ENCODE measurements at regions of chr12 and their contacts with region 1.

Region 1: DNA sequence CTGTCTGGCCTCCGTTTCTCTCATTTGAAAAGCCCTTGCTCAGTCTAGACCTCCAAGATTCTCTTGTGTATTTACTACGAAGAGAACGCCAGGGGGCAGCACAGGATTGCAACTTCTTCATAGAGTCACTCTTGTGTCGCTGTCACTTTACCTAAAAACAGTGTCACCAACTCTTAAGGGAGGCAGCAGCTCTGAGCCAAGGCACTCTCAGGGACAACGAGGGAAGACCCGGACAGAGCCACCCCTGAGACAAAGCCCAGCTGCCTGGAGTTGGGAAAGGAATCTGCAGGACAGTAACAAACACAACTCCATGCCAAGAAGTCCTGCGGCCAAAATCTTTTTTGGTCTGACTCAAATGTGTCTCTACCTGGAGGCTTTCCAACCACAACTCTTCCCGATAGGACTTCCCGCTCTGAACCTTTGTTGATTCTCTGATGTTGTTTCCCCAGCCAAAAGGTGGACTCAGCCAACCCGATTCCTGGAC is 9.6 kb upstream of the RPAP3 start:
- DNase-seq: peak; percentile 70 to 83
- ATAC-seq: peak; percentile 60

Region 2: DNA sequence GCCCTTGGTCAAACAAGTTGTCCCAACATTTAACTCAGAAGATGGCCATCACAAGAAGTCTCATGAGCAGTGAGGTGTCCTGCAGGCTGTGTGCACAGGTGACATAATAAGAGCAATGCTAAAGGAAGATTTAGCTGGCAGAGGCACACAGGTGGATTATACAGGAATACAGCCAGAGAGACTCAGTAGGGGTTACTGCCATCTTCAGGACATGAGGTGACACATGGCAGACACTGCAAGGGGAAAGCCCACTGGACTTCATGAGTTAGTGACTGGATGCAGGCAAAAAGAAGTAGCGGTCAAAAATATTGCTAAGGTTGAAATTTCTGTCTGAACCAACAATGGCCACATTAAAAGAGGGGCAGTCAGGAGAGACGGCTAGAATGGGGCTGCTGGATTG is 57.9 kb before region 1 on chr12:
- intact Hi-C with region 1: no loop called
- DNase-seq: no peak
- ATAC-seq: no peak

Region 3: GRCh38 chr12:47767216-47767724 is 51.8 kb after region 1 on chr12:
- intact Hi-C with region 1: loop called (anchors 5 to 10 kb)
- DNase-seq: peak; percentile 54 to 65
- ATAC-seq: peak; percentile 78

Region 4: DNA sequence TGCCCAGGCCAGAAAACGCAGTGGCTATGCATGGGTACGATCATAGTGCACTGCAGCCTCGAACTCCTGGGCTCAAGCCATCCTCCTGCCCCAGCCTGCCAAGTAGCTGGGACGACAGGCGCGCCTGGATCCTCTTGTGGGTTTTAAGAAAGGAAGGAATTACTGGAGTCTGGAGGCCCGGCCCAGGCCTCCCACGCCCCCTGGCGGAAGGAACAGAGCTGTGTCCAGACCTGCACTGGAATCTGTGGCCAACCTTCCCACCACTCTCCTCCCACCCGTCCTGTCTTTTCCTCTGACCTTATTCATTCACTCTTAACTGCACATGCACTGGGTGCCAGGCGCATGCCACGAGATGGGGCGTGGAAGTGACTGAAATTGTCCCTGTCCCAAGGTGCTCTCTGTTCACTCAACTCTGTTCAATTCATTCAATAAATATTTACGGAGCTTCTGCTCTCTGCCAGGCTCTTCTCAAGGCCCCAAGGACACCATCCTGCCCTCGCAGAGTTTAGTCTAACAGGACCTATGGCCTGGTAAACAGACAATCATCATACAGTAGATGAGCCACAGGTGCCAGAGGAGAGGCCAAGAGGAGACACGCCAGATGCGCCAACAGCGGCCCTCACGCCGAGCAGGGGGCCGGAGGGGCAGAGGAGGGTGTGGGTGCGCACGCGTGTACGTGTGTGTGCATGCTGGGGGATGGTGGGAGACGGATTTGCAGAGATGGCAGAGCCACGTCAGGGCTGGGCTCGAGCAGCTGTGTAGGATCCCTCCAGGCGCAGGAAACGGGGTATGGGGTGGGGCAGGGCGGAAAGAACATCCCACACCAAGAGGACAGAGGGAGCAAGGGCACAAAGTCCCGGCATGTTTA is 234.2 kb after region 1 on chr12:
- intact Hi-C with region 1: no loop called
- DNase-seq: peak; percentile 81 to 89
- ATAC-seq: peak; percentile 77